AG04449 (cell line): ENCODE measurements at regions of chr17 and their contacts with region 1.

Region 1: GRCh38 chr17:49016788-49017463 is 19.7 kb downstream of the IGF2BP1 start:
- DNase-seq: no peak
- H3K4me3 ChIP-seq: no peak overlapping the region
- CTCF ChIP-seq: no peak

Region 2: GRCh38 chr17:48997083-48997826 is 19.7 kb before region 1 on chr17 and contains the start of gene IGF2BP1:
- CTCF ChIA-PET with region 1: interaction called, 52 read pairs
- POLR2A ChIA-PET with region 1: interaction called, 3 read pairs
- DNase-seq: no peak
- H3K4me3 ChIP-seq: peak within 1 kb of the TSS; percentile 91
- CTCF ChIP-seq: no peak

Region 3: GRCh38 chr17:49003623-49004511 is 13.1 kb before region 1 on chr17:
- CTCF ChIA-PET with region 1: interaction called, 52 read pairs
- POLR2A ChIA-PET with region 1: interaction called, 3 read pairs
- DNase-seq: no peak
- H3K4me3 ChIP-seq: peak overlapping the region; percentile 58
- CTCF ChIP-seq: no peak

Region 4: GRCh38 chr17:49132699-49133364 is 115.9 kb after region 1 on chr17 and contains the start of gene B4GALNT2:
- CTCF ChIA-PET with region 1: no interaction called
- POLR2A ChIA-PET with region 1: no interaction called
- DNase-seq: no peak
- H3K4me3 ChIP-seq: peak within 1 kb of the TSS; percentile 50
- CTCF ChIP-seq: no peak